ENCODE measurements at regions of chr3 and their contacts with region 1.

Region 1: DNA sequence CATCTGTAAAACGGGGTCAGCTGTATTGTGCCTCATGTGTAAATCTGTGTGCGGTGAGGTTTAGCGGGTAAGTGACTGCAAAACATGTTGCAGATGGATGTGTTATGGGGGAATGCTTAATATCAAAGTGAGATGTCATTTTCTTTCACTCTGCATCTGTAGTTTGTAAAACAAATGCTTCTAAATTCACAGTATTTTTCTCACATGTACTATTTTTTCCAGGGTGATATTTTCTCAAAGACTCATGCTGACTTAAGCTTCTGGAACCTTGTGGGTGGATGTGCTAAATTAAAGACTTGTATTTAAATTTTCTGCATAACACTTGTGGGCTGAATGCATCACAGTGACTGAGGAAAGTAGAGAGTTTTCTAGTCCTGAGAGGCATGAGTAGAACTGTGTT is 115.2 kb upstream of the TP63 start:
- DNase-seq: no peak
- H3K4me3 Mint-ChIP-seq: no peak overlapping the region
- H3K27ac Mint-ChIP-seq: peak overlapping the region; percentile 28
- H3K4me1 Mint-ChIP-seq: peaks cover 15% of the 10 kb centered on the region
- H3K27me3 Mint-ChIP-seq: no peaks in the 10 kb centered on the region

Region 2: DNA sequence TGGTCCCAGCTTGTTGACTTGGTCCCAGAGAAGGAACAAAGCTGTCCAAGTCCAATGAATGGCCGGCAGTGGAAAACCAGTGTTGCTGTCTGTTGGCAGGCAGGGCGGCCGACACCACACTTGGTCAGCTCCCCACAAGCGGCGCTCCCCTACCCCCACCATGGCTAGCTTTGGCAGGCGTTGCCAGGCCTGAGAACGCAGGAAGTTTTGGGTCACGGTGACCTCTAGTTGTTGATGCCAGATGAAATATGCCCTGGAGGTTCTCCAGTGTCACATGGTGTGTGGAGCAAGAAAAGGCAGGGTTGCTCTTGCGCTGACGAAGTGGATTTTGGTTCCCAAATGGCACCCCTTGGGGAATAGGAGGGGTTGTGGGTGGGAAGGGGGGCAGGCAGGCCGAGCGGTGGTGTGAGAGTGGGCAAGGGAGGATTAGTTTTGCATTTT is 417.0 kb before region 1 on chr3:
- intact Hi-C with region 1: no loop called
- DNase-seq: no peak
- H3K4me3 Mint-ChIP-seq: no peak overlapping the region
- H3K27ac Mint-ChIP-seq: no peak overlapping the region
- H3K4me1 Mint-ChIP-seq: no peaks in the 10 kb centered on the region
- H3K27me3 Mint-ChIP-seq: peaks cover 27% of the 10 kb centered on the region

Region 3: GRCh38 chr3:189502676-189503257 is 13.3 kb before region 1 on chr3:
- intact Hi-C with region 1: loop called (anchors 2 kb)
- DNase-seq: no peak
- H3K4me3 Mint-ChIP-seq: no peak overlapping the region
- H3K27ac Mint-ChIP-seq: peak overlapping the region; percentile 30
- H3K4me1 Mint-ChIP-seq: peaks cover 41% of the 10 kb centered on the region
- H3K27me3 Mint-ChIP-seq: no peaks in the 10 kb centered on the region